ENCODE measurements at regions of chr3 and their contacts with region 1.

Region 1: GRCh38 chr3:3179407-3180094 is at the start of gene CRBN:
- DNase-seq: peak; percentile 80 to 94 (median 88)
- ATAC-seq: peak; percentile 96
- H3K4me3 ChIP-seq: peak within 1 kb of the TSS; percentile 70 to 87
- H3K4me3 Mint-ChIP-seq: peak within 1 kb of the TSS; percentile 89
- H3K27ac ChIP-seq: peak within 1 kb of the TSS; percentile 77 to 80
- H3K27ac Mint-ChIP-seq: peak within 1 kb of the TSS; percentile 91
- H3K4me1 ChIP-seq: peaks cover 47% of the 10 kb centered on the region
- H3K4me1 Mint-ChIP-seq: peaks cover 43% of the 10 kb centered on the region
- H3K27me3 ChIP-seq: no peaks in the 10 kb centered on the region
- H3K27me3 Mint-ChIP-seq: no peaks in the 10 kb centered on the region
- CTCF ChIP-seq: peak; percentile 90
- total RNA-seq, gene CRBN: 143 to 144 TPM

Region 2: DNA sequence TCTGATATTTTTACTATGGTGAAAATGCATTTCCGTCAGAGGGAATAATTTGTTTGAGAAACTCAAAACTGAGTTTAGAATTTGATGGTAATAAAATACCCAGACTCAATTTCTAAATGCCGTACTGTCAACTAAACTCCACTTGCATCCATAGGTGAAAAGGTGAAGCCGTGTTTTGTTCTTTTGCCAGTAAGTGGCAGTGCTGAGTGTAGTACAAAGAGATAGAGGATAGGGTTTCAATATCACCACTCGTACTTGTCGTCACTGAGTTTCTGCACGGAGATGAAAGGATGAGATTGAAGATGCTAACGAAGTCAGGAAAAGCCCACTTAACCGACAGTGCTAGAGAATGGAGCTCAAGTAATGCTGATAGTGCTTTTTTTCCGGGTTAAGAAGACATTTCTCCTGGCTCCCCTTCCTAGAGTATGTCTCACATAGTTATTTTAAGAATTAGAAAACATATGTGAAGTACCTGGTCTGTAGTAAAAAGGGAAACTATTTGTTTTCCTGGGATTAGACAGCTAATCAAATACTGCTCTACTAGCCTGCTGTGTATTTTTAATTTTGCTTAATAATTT is 414.5 kb before region 1 on chr3:
- CTCF ChIA-PET with region 1: no interaction called
- POLR2A ChIA-PET with region 1: no interaction called
- intact Hi-C with region 1: loop called in 1 of 2 experiments (anchors 5 kb)
- DNase-seq: peak in 2 of 9 experiments; percentile 23 to 41
- ATAC-seq: no peak
- H3K4me3 ChIP-seq: no peak overlapping the region
- H3K4me3 Mint-ChIP-seq: no peak overlapping the region
- H3K27ac ChIP-seq: no peak overlapping the region
- H3K27ac Mint-ChIP-seq: no peak overlapping the region
- H3K4me1 ChIP-seq: no peaks in the 10 kb centered on the region
- H3K4me1 Mint-ChIP-seq: peaks cover 4% of the 10 kb centered on the region
- H3K27me3 ChIP-seq: peaks cover 0 to 4% of the 10 kb centered on the region in 2 experiments
- H3K27me3 Mint-ChIP-seq: peaks cover 4% of the 10 kb centered on the region
- CTCF ChIP-seq: no peak

Region 3: GRCh38 chr3:3027976-3028567 is 151.5 kb before region 1 on chr3:
- CTCF ChIA-PET with region 1: no interaction called
- POLR2A ChIA-PET with region 1: no interaction called
- intact Hi-C with region 1: loop called in 1 of 2 experiments (anchors 10 kb)
- DNase-seq: peak in 2 of 9 experiments; percentile 33 to 60
- ATAC-seq: peak; percentile 52
- H3K4me3 ChIP-seq: no peak overlapping the region
- H3K4me3 Mint-ChIP-seq: peak overlapping the region; percentile 1
- H3K27ac ChIP-seq: peak overlapping the region in 1 of 2 experiments; percentile 3
- H3K27ac Mint-ChIP-seq: no peak overlapping the region
- H3K4me1 ChIP-seq: peaks cover 10% of the 10 kb centered on the region
- H3K4me1 Mint-ChIP-seq: peaks cover 11% of the 10 kb centered on the region
- H3K27me3 ChIP-seq: no peaks in the 10 kb centered on the region
- H3K27me3 Mint-ChIP-seq: no peaks in the 10 kb centered on the region
- CTCF ChIP-seq: no peak

Region 4: DNA sequence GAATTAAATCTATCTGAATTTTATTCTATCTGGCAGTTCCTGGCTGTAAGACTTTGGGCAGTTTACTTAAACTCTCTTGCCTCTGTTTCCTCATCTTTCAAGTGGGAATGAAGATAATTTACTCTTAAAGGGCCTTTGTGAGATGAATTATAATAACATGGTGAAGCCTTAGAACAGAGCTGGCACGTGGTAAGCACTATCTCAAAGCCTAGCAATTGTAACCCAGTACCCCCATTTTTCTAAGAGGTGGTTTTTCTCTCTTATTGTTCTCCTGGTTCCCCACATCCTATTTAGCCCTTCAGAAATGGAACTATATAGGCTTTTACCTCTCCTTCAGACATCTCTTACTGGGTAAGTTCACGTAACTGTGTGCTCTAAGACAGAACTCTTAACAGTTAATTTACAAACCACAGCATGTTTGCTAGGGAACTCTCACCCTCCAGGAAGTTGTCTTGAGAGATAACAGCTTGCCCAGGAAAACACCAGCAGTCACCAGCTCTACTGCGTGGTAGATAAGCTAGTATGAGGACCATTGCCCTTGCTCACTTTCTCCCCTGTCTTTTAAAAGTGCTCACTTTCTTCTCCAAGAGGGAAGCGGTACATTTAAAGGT is 12.2 kb after region 1 on chr3:
- CTCF ChIA-PET with region 1: interaction called, 20 read pairs
- POLR2A ChIA-PET with region 1: interaction called, 9 read pairs
- intact Hi-C with region 1: loop called in 1 of 2 experiments (anchors 1 kb)
- DNase-seq: peak in 6 of 9 experiments; percentile 8 to 63 (median 32)
- ATAC-seq: peak; percentile 70
- H3K4me3 ChIP-seq: peak overlapping the region; percentile 9 to 31
- H3K4me3 Mint-ChIP-seq: peak overlapping the region; percentile 74
- H3K27ac ChIP-seq: peak overlapping the region; percentile 31 to 69
- H3K27ac Mint-ChIP-seq: peak overlapping the region; percentile 89
- H3K4me1 ChIP-seq: peaks cover 29% of the 10 kb centered on the region
- H3K4me1 Mint-ChIP-seq: peaks cover 49% of the 10 kb centered on the region
- H3K27me3 ChIP-seq: no peaks in the 10 kb centered on the region
- H3K27me3 Mint-ChIP-seq: no peaks in the 10 kb centered on the region
- CTCF ChIP-seq: no peak

Region 5: GRCh38 chr3:4303187-4304123 is 1123.9 kb after region 1 on chr3 and contains the start of gene SETMAR:
- CTCF ChIA-PET with region 1: no interaction called
- POLR2A ChIA-PET with region 1: no interaction called
- intact Hi-C with region 1: loop called (anchors 1 kb)
- DNase-seq: peak; percentile 67 to 89 (median 80)
- ATAC-seq: peak; percentile 92
- H3K4me3 ChIP-seq: peak within 1 kb of the TSS; percentile 71 to 83
- H3K4me3 Mint-ChIP-seq: peak within 1 kb of the TSS; percentile 92
- H3K27ac ChIP-seq: peak within 1 kb of the TSS; percentile 70 to 88
- H3K27ac Mint-ChIP-seq: peak within 1 kb of the TSS; percentile 96
- H3K4me1 ChIP-seq: peaks cover 5% of the 10 kb centered on the region
- H3K4me1 Mint-ChIP-seq: peaks cover 24% of the 10 kb centered on the region
- H3K27me3 ChIP-seq: no peaks in the 10 kb centered on the region
- H3K27me3 Mint-ChIP-seq: no peaks in the 10 kb centered on the region
- CTCF ChIP-seq: no peak
- total RNA-seq, gene SETMAR: 8.4 to 9.8 TPM

Region 6: GRCh38 chr3:5122030-5122740 is 1942.6 kb after region 1 on chr3 and contains the start of gene ARL8B:
- CTCF ChIA-PET with region 1: no interaction called
- POLR2A ChIA-PET with region 1: no interaction called
- intact Hi-C with region 1: loop called (anchors 2 kb)
- DNase-seq: peak; percentile 80 to 95 (median 91)
- ATAC-seq: peak; percentile 98
- H3K4me3 ChIP-seq: peak within 1 kb of the TSS; percentile 91 to 98
- H3K4me3 Mint-ChIP-seq: peak within 1 kb of the TSS; percentile 81
- H3K27ac ChIP-seq: peak within 1 kb of the TSS; percentile 87 to 92
- H3K27ac Mint-ChIP-seq: peak within 1 kb of the TSS; percentile 81
- H3K4me1 ChIP-seq: peaks cover 31% of the 10 kb centered on the region
- H3K4me1 Mint-ChIP-seq: peaks cover 38% of the 10 kb centered on the region
- H3K27me3 ChIP-seq: no peaks in the 10 kb centered on the region
- H3K27me3 Mint-ChIP-seq: no peaks in the 10 kb centered on the region
- CTCF ChIP-seq: peak; percentile 92
- total RNA-seq, gene ARL8B: 54.1 to 61.7 TPM

Measured in CD8-positive, alpha-beta T cell (primary cell).